Upper lobe of right lung (tissue), 1 donor: ENCODE measurements at regions of chr12 and their contacts with region 1.

Region 1: GRCh38 chr12:90042920-90043641 is 334.4 kb upstream of the ATP2B1 start:
- DNase-seq: no peak
- ATAC-seq: no peak
- H3K4me3 ChIP-seq: no peak overlapping the region
- H3K27ac ChIP-seq: no peak overlapping the region
- H3K4me1 ChIP-seq: no peaks in the 10 kb centered on the region
- H3K27me3 ChIP-seq: no peaks in the 10 kb centered on the region
- CTCF ChIP-seq: no peak

Region 2: DNA sequence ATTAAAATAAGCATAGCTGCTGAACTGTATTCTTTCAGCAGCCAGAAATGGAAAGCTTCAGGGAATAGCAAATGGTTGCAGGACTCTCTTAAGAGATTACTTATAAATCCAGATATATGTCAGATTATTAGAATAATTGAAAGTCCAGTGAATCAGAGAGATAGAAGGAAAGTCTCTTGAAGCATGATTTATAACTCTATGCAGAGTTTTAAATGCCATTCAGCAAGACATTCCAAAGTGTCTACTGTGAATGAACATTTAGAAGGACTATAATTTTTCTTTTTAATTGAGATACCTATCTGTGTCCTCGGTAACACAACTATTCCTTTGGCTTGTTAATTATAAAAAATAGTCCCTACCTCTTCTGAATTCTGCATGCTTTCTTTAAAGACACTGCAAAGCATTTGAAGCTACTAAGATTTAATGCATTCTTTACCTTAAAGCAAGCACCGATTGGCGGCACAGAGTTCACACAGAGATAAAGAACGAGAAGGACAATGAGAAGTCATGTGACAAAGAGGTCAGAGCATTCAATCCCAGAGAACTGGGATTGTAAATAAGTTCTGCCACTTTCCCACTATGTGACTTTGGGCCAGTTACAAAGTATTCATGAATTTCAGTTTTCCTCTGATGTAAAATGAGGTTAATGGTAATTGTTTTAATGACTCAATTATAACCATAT is 36.6 kb after region 1 on chr12:
- intact Hi-C with region 1: loop called (anchors 2 kb)
- DNase-seq: no peak
- ATAC-seq: no peak
- H3K4me3 ChIP-seq: no peak overlapping the region
- H3K27ac ChIP-seq: no peak overlapping the region
- H3K4me1 ChIP-seq: no peaks in the 10 kb centered on the region
- H3K27me3 ChIP-seq: no peaks in the 10 kb centered on the region
- CTCF ChIP-seq: no peak